Right ventricle myocardium superior (tissue), 1 donor: ENCODE measurements at regions of chr11 and their contacts with region 1.

Region 1: DNA sequence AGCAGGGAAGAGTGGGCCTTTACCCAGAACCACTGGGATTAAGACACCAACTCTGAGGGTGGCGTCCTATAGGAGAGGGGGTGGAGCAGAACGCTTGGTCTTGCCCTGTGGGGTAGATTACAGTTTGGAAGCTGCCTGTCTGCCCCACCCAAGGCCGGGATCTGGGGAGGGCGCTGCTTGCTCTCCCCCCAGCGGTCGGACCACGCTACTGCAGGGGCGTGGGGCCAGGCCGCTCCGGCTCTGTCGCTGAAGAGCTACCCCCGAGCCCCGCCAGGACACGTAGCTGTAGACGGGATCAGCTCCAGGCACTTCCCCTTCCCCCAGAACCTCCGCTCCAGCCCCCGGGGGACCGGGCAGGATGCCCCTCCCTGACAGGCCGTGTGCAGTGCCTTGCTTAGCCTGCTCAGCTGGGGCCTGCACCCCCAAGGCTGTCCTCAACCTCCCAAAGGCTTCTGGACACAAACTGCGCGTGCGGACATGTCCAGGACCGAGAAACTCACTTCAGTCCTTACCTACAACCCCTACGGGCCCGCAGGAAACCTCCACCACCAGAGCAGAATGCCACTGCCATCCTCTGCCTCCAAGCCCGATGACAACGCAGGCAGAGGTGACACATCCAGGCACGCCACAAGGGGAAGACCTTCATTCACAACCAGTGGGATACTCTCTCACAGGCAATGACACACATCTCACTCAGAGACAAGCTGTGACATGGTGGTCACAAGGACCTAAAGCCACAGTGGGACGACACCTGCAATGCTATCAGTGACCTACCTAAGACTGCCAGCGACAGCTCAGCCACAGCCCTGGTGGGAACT is 3.6 kb downstream of the AHNAK start:
- DNase-seq: peak; percentile 91
- ATAC-seq: peak; percentile 34

Region 2: GRCh38 chr11:62394825-62395538 is 148.0 kb before region 1 on chr11:
- intact Hi-C with region 1: loop called (anchors 5 kb)
- DNase-seq: peak; percentile 90
- ATAC-seq: peak; percentile 90

Region 3: GRCh38 chr11:62427630-62428233 is 115.2 kb before region 1 on chr11:
- intact Hi-C with region 1: loop called (anchors 5 kb)
- DNase-seq: no peak
- ATAC-seq: no peak

Region 4: DNA sequence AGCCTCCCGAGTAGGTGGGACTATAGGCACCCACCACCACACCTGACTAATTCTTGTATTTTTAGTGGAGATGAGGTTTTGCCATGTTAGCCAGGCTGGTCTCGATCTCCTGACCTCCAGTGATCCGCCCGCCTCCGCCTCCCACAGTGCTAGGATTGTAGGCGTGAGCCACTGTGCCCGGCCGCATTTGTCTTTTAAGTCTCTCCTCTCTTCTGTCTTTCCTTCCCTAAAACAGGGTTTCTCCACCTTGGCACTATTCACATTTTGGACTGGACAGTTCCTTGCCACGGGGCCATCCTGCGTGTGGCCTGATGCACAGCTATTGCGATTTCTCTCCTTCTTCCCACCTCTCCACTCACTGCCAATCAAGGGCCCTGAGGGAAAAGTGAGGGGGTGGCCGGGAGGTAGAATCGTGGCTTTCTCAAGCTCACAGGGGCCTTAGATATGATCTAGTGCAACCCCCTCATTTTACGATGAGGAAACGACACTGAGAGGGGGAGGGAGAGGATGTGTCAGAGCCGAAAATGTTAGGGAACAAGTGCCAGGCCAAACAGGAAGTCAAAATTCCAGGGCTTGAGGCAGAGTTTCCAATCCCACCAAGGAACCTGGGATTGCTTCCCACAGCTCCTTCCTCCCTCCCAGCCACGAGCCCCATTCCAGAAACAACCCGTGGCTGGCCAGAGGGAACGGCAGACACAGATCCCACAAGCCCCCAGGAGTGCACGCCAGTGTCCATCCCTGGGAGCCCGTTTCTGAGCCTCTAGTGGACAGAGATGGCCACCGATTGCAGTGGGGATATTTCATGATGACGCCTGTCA is 103.0 kb before region 1 on chr11:
- intact Hi-C with region 1: no loop called
- DNase-seq: no peak
- ATAC-seq: peak; percentile 8

Region 5: GRCh38 chr11:62461740-62462507 is 81.0 kb before region 1 on chr11:
- intact Hi-C with region 1: no loop called
- DNase-seq: no peak
- ATAC-seq: no peak

Region 6: DNA sequence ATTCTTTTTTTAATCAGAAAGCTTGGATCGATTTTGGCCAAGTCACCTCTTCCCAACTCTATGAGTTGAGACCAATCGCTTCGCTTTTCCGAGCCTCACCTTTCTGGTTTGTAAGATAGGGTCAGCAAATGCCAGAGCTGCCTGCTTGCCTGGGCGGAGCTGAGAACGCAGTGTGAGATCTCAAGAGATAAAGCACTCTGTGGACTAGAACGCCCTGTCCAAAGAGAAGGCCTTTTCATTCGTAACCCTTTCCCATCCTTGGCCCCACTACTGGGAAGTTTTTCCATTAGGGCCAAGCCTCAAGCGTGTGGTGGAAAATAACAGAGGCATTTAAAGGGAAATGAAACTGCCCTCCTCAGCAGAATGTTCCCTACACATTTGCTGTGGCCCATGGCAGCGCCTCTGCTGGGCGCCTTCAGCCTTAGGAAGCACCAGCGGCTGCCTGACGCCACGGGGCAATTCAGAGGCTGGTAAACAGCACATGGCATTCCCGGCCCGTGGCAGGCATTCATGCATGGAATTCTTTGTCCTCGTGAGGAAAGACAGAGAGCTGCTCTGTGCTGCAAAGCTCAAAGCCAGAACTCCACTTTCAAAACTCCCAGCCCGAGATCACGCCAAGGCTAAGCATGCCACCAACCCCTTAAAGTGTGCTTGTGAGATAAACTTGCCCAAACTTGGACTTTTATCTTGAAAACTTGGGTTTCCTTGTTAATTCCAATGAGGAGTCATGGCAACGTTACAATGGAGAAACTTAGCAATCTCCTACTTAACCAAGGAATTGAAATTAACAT is 34.5 kb before region 1 on chr11:
- intact Hi-C with region 1: loop called (anchors 5 kb)
- DNase-seq: peak; percentile 89
- ATAC-seq: peak; percentile 85